Dorsolateral prefrontal cortex (tissue), 120 donors: ENCODE measurements at regions of chr1 and their contacts with region 1.

Region 1: GRCh38 chr1:36088575-36089443 is at the start of gene ADPRS:
- DNase-seq: peak; percentile 77 to 92 (median 84)
- H3K4me3 ChIP-seq: peak within 1 kb of the TSS; percentile 71 to 100 (median 95)
- H3K27ac ChIP-seq: peak within 1 kb of the TSS; percentile 43 to 97 (median 90)
- H3K27me3 ChIP-seq: peaks cover 0 to 4% (median 0%) of the 10 kb centered on the region in 45 donors
- CTCF ChIP-seq: peak; percentile 86 to 100 (median 99)
- total RNA-seq, gene ADPRS: 14.4 to 31.1 (median 20.5) TPM

Region 2: DNA sequence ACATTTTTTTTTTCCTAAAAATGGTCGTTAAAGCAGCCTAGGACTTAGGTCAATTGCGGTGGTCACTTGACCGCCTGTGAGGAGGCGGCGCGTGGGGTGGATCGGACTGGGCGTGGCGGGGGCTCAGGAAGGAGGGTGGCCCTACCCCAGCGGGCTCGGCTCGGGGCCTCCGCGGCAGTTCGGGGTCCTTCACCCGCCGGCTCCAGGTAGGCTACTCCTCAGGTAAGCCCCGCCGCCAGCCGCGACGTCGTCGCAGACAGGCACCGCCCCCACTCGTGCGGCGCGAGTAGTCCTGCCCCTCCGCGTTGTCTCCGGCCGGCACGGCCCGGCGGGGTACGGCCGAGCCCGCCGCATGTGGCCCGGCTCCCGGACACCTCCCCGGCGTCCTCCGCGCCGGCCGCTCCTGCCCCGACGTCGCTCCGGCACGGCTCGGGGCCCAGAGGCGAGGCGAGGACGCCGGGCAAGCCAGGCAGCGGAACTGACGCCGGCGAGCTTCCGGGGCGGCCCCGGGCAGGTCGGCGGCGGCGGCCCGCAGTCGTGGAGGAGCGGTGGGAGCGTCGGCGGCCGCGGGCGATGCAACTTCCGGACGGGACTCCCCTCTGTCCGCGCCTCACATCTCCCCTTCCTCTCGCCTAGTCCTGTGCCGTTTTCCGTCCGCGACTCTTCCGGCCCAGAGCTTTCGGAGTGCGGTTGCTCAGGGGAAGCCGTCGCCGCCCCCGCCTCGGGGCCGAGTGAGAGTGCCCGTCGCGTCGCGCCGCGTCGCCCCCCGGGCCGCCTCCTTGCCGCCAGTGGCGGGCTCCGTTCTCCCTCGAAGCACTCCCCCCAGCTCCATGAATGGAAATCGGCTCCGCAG is 158.0 kb before region 1 on chr1 and contains the start of gene AGO3:
- intact Hi-C with region 1: loop called (anchors 5 to 10 kb)
- DNase-seq: peak; percentile 63 to 91 (median 76)
- H3K4me3 ChIP-seq: peak within 1 kb of the TSS; percentile 64 to 99 (median 92)
- H3K27ac ChIP-seq: peak within 1 kb of the TSS; percentile 53 to 99 (median 96)
- H3K27me3 ChIP-seq: no peaks in the 10 kb centered on the region
- CTCF ChIP-seq: peak in 6 of 56 donors; percentile 4 to 32 (median 13)
- total RNA-seq, gene AGO3: 29.2 to 63.9 (median 43.8) TPM

Region 3: GRCh38 chr1:36203554-36204346 is 114.9 kb after region 1 on chr1:
- intact Hi-C with region 1: no loop called
- DNase-seq: peak in 7 of 10 donors; percentile 42 to 68 (median 50)
- H3K4me3 ChIP-seq: peak overlapping the region in 3 of 59 donors; percentile 3 to 25 (median 4)
- H3K27ac ChIP-seq: peak overlapping the region; percentile 10 to 95 (median 87)
- H3K27me3 ChIP-seq: no peaks in the 10 kb centered on the region
- CTCF ChIP-seq: no peak